B cell (primary cell): ENCODE measurements at regions of chr7 and their contacts with region 1.

Region 1: GRCh38 chr7:134514663-134515062 is 12.7 kb upstream of the AKR1B10 start:
- DNase-seq: peak; percentile 74
- ATAC-seq: peak; percentile 69
- H3K4me3 ChIP-seq: no peak overlapping the region
- H3K4me3 Mint-ChIP-seq: no peak overlapping the region
- H3K27ac ChIP-seq: no peak overlapping the region
- H3K27ac Mint-ChIP-seq: no peak overlapping the region
- H3K4me1 ChIP-seq: peaks cover 0 to 3% of the 10 kb centered on the region in 2 donors
- H3K4me1 Mint-ChIP-seq: peaks cover 2% of the 10 kb centered on the region
- H3K27me3 ChIP-seq: peaks cover 0 to 9% (median 4%) of the 10 kb centered on the region in 4 experiments
- H3K27me3 Mint-ChIP-seq: peaks cover 26% of the 10 kb centered on the region
- CTCF ChIP-seq: peak; percentile 94

Region 2: GRCh38 chr7:134605973-134606923 is 91.6 kb after region 1 on chr7:
- CTCF ChIA-PET with region 1: interaction called, 9 read pairs
- POLR2A ChIA-PET with region 1: no interaction called
- intact Hi-C with region 1: loop called (anchors 1 kb)
- DNase-seq: peak; percentile 72
- ATAC-seq: peak; percentile 71
- H3K4me3 ChIP-seq: no peak overlapping the region
- H3K4me3 Mint-ChIP-seq: no peak overlapping the region
- H3K27ac ChIP-seq: no peak overlapping the region
- H3K27ac Mint-ChIP-seq: no peak overlapping the region
- H3K4me1 ChIP-seq: peaks cover 0 to 3% of the 10 kb centered on the region in 2 donors
- H3K4me1 Mint-ChIP-seq: peaks cover 3% of the 10 kb centered on the region
- H3K27me3 ChIP-seq: peaks cover 0 to 13% (median 2%) of the 10 kb centered on the region in 4 experiments
- H3K27me3 Mint-ChIP-seq: peaks cover 43% of the 10 kb centered on the region
- CTCF ChIP-seq: peak; percentile 94